Activated CD4-positive, alpha-beta T cell treated with anti-CD3 and anti-CD28 coated beads, Interleukin-2, amount 10 ng/mL, durations not matched to agents 24 days and 14 days (primary cell): ENCODE measurements at regions of chr3 and their contacts with region 1.

Region 1: GRCh38 chr3:62493109-62493801 is 119.9 kb upstream of the FEZF2 start:
- DNase-seq: no peak
- H3K4me3 Mint-ChIP-seq: no peak overlapping the region
- H3K27ac Mint-ChIP-seq: no peak overlapping the region
- H3K4me1 Mint-ChIP-seq: no peaks in the 10 kb centered on the region
- H3K27me3 Mint-ChIP-seq: no peaks in the 10 kb centered on the region

Region 2: GRCh38 chr3:61724201-61724640 is 769.0 kb before region 1 on chr3:
- intact Hi-C with region 1: no loop called
- DNase-seq: no peak
- H3K4me3 Mint-ChIP-seq: no peak overlapping the region
- H3K27ac Mint-ChIP-seq: no peak overlapping the region
- H3K4me1 Mint-ChIP-seq: no peaks in the 10 kb centered on the region
- H3K27me3 Mint-ChIP-seq: peaks cover 2% of the 10 kb centered on the region

Region 3: GRCh38 chr3:62039586-62039985 is 453.7 kb before region 1 on chr3:
- intact Hi-C with region 1: no loop called
- DNase-seq: no peak
- H3K4me3 Mint-ChIP-seq: no peak overlapping the region
- H3K27ac Mint-ChIP-seq: no peak overlapping the region
- H3K4me1 Mint-ChIP-seq: no peaks in the 10 kb centered on the region
- H3K27me3 Mint-ChIP-seq: no peaks in the 10 kb centered on the region

Region 4: DNA sequence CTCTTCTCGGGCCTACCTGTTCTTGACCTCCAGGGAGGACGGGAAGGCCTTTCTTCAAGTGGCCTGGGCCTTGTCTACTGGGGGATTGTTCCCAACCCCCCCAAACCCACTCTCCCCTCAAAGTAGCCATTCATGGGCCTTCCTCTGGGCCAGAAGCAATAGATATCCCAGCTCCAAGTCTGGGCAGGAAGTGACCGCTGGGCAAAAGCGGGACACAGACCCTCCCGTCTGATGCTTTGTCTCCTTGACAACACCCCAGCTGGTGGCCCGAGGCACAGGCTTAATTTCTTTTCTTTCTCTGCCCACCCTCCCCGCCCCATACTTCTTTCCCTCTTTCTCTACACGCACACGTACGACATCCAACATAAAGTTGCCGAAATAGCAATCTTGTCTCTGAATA is 78.5 kb before region 1 on chr3:
- intact Hi-C with region 1: loop called (anchors 5 kb)
- DNase-seq: no peak
- H3K4me3 Mint-ChIP-seq: no peak overlapping the region
- H3K27ac Mint-ChIP-seq: no peak overlapping the region
- H3K4me1 Mint-ChIP-seq: no peaks in the 10 kb centered on the region
- H3K27me3 Mint-ChIP-seq: peaks cover 4% of the 10 kb centered on the region